Left colon (tissue), 2 donors: ENCODE measurements at regions of chr10 and their contacts with region 1.

Region 1: GRCh38 chr10:69914398-69915214 is 112.9 kb downstream of the COL13A1 start:
- DNase-seq: peak; percentile 61 to 81
- ATAC-seq: peak; percentile 64

Region 2: GRCh38 chr10:69797631-69798368 is 116.8 kb before region 1 on chr10:
- intact Hi-C with region 1: loop called in 1 of 2 experiments (anchors 10 kb)
- DNase-seq: no peak
- ATAC-seq: no peak

Region 3: GRCh38 chr10:69988094-69988493 is 73.5 kb after region 1 on chr10:
- intact Hi-C with region 1: no loop called
- DNase-seq: no peak
- ATAC-seq: no peak